Activated T-helper 1 cell treated with anti-CD3 and anti-CD28 coated beads, Interleukin-12 subunit alpha, Interleukin-12 subunit beta, Interleukin-2, Interleukin-4 antibody, amounts not matched to agents 30 ng/mL and 10 ng/mL and 1 ng/mL, durations not matched to agents 14 hours and 24 hours and 36 hours (primary cell): ENCODE measurements at regions of chr1 and their contacts with region 1.

Region 1: GRCh38 chr1:89632657-89633247 is at the start of gene LRRC8C:
- DNase-seq: peak; percentile 84
- H3K4me3 Mint-ChIP-seq: peak within 1 kb of the TSS; percentile 92
- H3K27ac Mint-ChIP-seq: peak within 1 kb of the TSS; percentile 96
- H3K4me1 Mint-ChIP-seq: peaks cover 77% of the 10 kb centered on the region
- H3K27me3 Mint-ChIP-seq: no peaks in the 10 kb centered on the region
- total RNA-seq, gene LRRC8C: 64.3 and 66.1 TPM in 2 replicates

Region 2: GRCh38 chr1:89171067-89171438 is 461.7 kb before region 1 on chr1:
- intact Hi-C with region 1: no loop called
- DNase-seq: no peak
- H3K4me3 Mint-ChIP-seq: no peak overlapping the region
- H3K27ac Mint-ChIP-seq: no peak overlapping the region
- H3K4me1 Mint-ChIP-seq: peaks cover 16% of the 10 kb centered on the region
- H3K27me3 Mint-ChIP-seq: no peaks in the 10 kb centered on the region

Region 3: DNA sequence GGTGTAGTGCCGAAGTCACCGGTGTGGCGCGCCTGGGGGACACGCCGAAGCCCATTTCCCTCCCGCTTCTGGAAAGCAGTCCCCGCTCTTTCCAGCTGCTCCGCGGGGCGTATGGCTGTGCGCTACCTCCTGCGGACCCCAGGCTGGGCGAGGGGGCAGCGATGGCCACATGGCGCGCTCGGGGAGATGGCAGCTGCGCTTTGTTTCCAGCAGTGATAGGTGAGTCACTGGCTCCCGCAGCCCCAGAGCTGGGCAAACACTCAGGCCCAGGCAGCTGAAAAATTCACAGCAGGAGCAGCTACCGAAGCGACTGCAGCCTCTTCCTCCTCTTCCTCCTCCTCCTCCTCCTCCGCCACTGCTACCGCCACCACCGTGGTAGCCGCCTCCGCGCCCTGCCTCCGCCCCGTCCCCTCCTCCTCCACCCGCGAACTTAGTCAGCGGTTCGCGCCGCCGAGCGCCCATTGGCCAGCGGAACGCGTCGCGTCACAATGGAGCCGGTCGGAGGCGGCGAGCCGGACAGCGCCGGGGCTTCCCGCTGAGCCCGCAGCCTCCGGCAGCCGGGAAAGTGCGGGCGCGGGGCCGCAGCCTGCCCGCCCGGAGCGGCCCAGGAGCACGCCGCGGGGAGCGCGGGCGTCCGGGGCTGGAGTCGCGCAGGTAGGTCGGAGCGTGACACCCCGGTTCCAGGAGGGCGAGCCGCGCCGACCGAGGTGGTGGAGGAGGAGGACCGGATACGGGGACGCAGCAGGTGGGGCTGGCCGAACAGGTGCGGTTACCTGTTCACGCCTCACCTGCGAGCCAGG is 108.2 kb before region 1 on chr1 and contains the start of gene LRRC8B:
- intact Hi-C with region 1: loop called (anchors 1 kb)
- DNase-seq: peak; percentile 89
- H3K4me3 Mint-ChIP-seq: no peak within 1 kb of the TSS
- H3K27ac Mint-ChIP-seq: no peak within 1 kb of the TSS
- H3K4me1 Mint-ChIP-seq: peaks cover 36% of the 10 kb centered on the region
- H3K27me3 Mint-ChIP-seq: no peaks in the 10 kb centered on the region
- total RNA-seq, gene LRRC8B: 62.3 and 69.9 TPM in 2 replicates

Region 4: DNA sequence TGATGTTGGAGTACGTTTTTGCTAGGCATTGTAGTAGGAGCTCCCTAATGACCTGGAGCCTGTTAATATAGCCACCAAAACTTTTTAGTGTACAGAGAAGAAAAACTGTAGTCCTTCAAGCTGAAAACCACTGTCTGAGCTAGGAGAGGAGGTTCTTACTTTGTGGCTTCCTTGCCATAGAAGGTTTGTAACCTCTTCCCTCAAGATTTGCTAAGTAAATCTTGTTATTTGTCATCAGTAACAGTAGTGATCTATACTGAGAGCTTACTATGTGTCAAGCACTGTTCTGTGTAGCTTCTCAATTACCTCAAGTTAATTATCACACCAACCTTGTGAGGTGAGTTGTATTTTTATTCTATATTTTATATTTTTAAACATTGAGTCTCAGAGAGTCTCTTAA is 21.0 kb before region 1 on chr1:
- intact Hi-C with region 1: loop called (anchors 1 kb)
- DNase-seq: no peak
- H3K4me3 Mint-ChIP-seq: peak overlapping the region; percentile 73
- H3K27ac Mint-ChIP-seq: peak overlapping the region; percentile 99
- H3K4me1 Mint-ChIP-seq: peaks cover 88% of the 10 kb centered on the region
- H3K27me3 Mint-ChIP-seq: no peaks in the 10 kb centered on the region

Region 5: GRCh38 chr1:89701746-89702241 is 69.0 kb after region 1 on chr1:
- intact Hi-C with region 1: loop called (anchors 2 kb)
- DNase-seq: no peak
- H3K4me3 Mint-ChIP-seq: peak overlapping the region; percentile 12
- H3K27ac Mint-ChIP-seq: peak overlapping the region; percentile 72
- H3K4me1 Mint-ChIP-seq: peaks cover 83% of the 10 kb centered on the region
- H3K27me3 Mint-ChIP-seq: no peaks in the 10 kb centered on the region

Region 6: DNA sequence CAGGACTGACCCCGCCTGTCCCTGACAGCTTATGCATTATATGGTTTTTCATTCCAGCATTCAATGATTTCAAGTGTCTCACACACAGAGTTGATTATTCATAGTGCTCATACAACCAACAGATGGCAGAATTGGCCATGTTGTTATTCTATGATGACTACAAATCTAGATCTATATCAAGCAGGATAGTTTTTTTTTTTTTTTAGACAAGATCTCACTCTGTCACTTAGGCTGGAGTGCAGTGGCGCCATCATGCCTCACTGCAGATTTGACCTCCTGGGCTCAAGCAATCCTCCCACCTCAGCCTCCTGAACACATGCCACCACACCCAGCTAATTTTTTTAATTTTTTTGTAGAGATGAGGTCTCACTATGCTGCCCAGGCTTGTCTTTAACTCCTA is 148.0 kb after region 1 on chr1:
- intact Hi-C with region 1: loop called (anchors 1 kb)
- DNase-seq: no peak
- H3K4me3 Mint-ChIP-seq: peak overlapping the region; percentile 59
- H3K27ac Mint-ChIP-seq: peak overlapping the region; percentile 97
- H3K4me1 Mint-ChIP-seq: peaks cover 48% of the 10 kb centered on the region
- H3K27me3 Mint-ChIP-seq: peaks cover 4% of the 10 kb centered on the region

Region 7: GRCh38 chr1:89987170-89987819 is 354.5 kb after region 1 on chr1:
- intact Hi-C with region 1: loop called (anchors 2 kb)
- DNase-seq: peak; percentile 54
- H3K4me3 Mint-ChIP-seq: no peak overlapping the region
- H3K27ac Mint-ChIP-seq: no peak overlapping the region
- H3K4me1 Mint-ChIP-seq: peaks cover 11% of the 10 kb centered on the region
- H3K27me3 Mint-ChIP-seq: peaks cover 7% of the 10 kb centered on the region